PC-9 (cell line): ENCODE measurements at regions of chr17 and their contacts with region 1.

Region 1: GRCh38 chr17:9924735-9925191 is 19.7 kb upstream of the RCVRN start:
- DNase-seq: peak; percentile 39 to 56
- H3K4me3 ChIP-seq: no peak overlapping the region
- H3K27ac ChIP-seq: no peak overlapping the region
- H3K4me1 ChIP-seq: 0 out of 2 replicates have a peak, but pooled peaks cover 3% of the 10 kb centered on the region
- H3K27me3 ChIP-seq: peaks cover 2% of the 10 kb centered on the region; the same call in 1 of the 2 replicates
- CTCF ChIP-seq: peak; percentile 86

Region 2: GRCh38 chr17:9644910-9645751 is 279.6 kb before region 1 on chr17 and contains the start of gene USP43:
- CTCF ChIA-PET with region 1: no interaction called
- POLR2A ChIA-PET with region 1: no interaction called
- intact Hi-C with region 1: loop called (anchors 10 kb)
- DNase-seq: peak; percentile 59 to 90
- H3K4me3 ChIP-seq: peak within 1 kb of the TSS; percentile 94
- H3K27ac ChIP-seq: peak within 1 kb of the TSS; percentile 92
- H3K4me1 ChIP-seq: peaks cover 25% of the 10 kb centered on the region
- H3K27me3 ChIP-seq: no peaks in the 10 kb centered on the region
- CTCF ChIP-seq: peak; percentile 32; the same call in 1 of the 2 replicates
- total RNA-seq, gene USP43: 16.0 and 19.2 TPM in 2 replicates

Region 3: DNA sequence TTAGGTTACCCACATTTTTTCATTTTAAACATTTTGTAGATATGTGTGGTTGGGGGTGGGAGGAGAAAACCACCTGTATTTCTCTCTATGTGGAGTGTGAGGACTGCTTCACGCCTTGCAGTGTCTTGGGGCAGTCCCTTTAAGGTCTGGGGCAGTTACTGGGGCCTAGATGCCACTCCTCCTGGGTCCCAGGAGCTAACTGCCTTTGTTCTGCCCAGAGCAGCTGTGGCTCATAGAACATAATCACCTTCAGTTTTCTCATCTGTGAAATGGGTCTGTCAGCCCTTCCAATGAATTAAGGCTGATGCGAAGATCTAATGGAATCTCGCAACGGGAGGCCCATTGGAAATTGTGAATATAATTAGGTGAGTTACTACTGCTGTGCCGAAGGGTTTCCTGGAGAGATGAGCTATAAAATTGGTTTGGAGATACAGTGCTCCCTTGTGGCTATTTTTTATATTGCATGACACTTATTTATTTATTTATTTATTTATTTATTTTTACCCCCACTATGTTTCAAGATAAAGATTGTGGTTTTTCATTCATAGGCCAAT is 156.3 kb before region 1 on chr17:
- CTCF ChIA-PET with region 1: interaction called, 10 read pairs
- POLR2A ChIA-PET with region 1: interaction called, 3 read pairs
- intact Hi-C with region 1: loop called (anchors 10 kb)
- DNase-seq: peak in 1 of 2 experiments; percentile 5
- H3K4me3 ChIP-seq: no peak overlapping the region
- H3K27ac ChIP-seq: no peak overlapping the region
- H3K4me1 ChIP-seq: no peaks in the 10 kb centered on the region; the same call in 1 of the 2 replicates
- H3K27me3 ChIP-seq: no peaks in the 10 kb centered on the region
- CTCF ChIP-seq: peak; percentile 67

Region 4: GRCh38 chr17:9817086-9817485 is 107.7 kb before region 1 on chr17:
- CTCF ChIA-PET with region 1: interaction called, 10 read pairs
- POLR2A ChIA-PET with region 1: no interaction called
- intact Hi-C with region 1: no loop called
- DNase-seq: peak in 1 of 2 experiments; percentile 83
- H3K4me3 ChIP-seq: no peak overlapping the region
- H3K27ac ChIP-seq: no peak overlapping the region
- H3K4me1 ChIP-seq: peaks cover 13% of the 10 kb centered on the region
- H3K27me3 ChIP-seq: no peaks in the 10 kb centered on the region
- CTCF ChIP-seq: no peak

Region 5: DNA sequence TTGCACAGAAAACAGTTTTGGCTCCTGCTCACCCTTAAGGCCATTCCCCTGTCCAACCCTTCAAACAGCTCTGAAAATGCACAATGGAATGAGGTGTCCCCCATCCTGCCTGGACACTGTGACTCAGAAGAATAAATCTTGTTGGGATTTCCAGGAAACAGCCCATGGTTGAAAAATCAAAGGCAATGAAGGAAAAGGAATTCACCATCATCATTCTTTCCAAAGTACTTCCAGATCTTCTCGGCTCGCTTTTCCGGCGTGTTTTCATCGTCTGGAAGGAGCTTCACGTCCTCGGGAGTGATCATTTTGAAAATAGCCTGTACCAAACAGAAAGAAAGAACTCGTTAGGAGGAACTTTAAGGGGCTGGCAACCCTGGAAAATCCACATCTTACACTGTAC is 24.0 kb before region 1 on chr17:
- CTCF ChIA-PET with region 1: interaction called, 15 read pairs
- POLR2A ChIA-PET with region 1: no interaction called
- intact Hi-C with region 1: no loop called
- DNase-seq: no peak
- H3K4me3 ChIP-seq: no peak overlapping the region
- H3K27ac ChIP-seq: no peak overlapping the region
- H3K4me1 ChIP-seq: peaks cover 8% of the 10 kb centered on the region; the same call in 1 of the 2 replicates
- H3K27me3 ChIP-seq: no peaks in the 10 kb centered on the region
- CTCF ChIP-seq: no peak

Region 6: DNA sequence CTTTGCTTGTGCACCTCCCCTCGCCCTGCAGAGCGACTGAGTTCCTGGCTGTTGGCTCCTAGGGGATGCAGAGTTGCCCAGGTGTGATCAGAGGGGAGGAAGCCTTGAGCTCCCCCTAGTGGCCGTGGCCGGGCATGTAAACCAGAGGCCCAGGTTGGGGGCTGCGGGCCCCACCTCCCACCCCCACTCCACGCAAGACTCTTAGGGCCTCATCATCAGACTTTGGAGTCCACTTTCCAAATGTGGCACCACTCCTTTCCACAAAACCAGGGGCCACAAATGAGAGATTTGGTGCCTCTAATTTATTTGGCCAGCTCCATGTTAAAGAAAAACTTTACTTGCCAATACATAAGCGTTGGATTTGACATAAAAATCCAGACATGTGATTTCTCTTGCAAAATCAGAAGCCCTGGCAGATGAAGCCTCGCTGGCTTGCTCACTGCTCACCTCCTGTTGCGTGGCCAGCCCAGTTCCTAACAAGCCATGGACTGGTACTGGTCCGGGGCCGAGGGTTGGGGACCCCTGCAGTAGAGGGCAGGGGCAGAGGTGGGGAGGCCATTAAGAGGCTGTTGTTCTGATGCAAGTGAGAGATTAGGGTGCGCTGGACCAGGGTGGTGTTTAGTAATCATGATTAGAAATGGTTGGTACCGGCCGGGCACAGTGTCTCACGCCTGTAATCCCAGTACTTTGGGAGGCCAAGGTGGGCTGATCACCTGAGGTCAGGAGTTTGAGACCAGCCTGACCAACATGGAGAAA is 302.3 kb after region 1 on chr17:
- CTCF ChIA-PET with region 1: interaction called, 3 read pairs
- POLR2A ChIA-PET with region 1: no interaction called
- intact Hi-C with region 1: loop called (anchors 1 kb)
- DNase-seq: peak in 1 of 2 experiments; percentile 30
- H3K4me3 ChIP-seq: no peak overlapping the region
- H3K27ac ChIP-seq: no peak overlapping the region
- H3K4me1 ChIP-seq: no peaks in the 10 kb centered on the region
- H3K27me3 ChIP-seq: peaks cover 3% of the 10 kb centered on the region; the same call in 1 of the 2 replicates
- CTCF ChIP-seq: peak; percentile 75